IMR-90 (cell line): ENCODE measurements at regions of chr14 and their contacts with region 1.

Region 1: DNA sequence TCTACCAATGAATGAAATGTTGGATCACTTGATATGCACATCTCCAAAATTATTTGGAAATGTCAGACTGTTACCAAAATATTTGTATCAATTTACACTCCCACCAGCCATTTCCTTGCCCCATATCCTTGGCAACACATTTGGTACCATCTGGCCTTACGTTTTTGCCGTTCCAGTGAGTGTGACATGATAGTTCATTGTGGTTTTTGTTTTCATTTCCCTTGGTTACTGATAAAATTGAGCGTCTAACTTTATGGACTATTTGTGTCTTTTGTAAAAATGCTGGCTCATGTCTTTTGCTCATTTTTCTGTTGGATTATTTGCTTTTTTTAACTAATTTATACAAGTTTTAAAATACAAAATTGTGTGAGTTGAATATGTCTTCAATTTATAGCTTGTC is 11.0 kb downstream of the KLHDC1 start:
- DNase-seq: peak; percentile 24
- ATAC-seq: no peak
- H3K4me3 ChIP-seq: no peak overlapping the region
- H3K27ac ChIP-seq: no peak overlapping the region
- H3K4me1 ChIP-seq: no peaks in the 10 kb centered on the region
- H3K27me3 ChIP-seq: no peaks in the 10 kb centered on the region
- CTCF ChIP-seq: no peak
- POLR2A ChIP-seq: no peak
- RAD21 ChIP-seq: no peak

Region 2: GRCh38 chr14:49686425-49686824 is 17.5 kb before region 1 on chr14:
- CTCF ChIA-PET with region 1: no interaction called
- POLR2A ChIA-PET with region 1: interaction called, 14 read pairs
- dilution Hi-C with region 1: no loop called
- in situ Hi-C with region 1: no loop called
- intact Hi-C with region 1: no loop called
- DNase-seq: no peak
- ATAC-seq: no peak
- H3K4me3 ChIP-seq: no peak overlapping the region
- H3K27ac ChIP-seq: no peak overlapping the region
- H3K4me1 ChIP-seq: peaks cover 3% of the 10 kb centered on the region
- H3K27me3 ChIP-seq: no peaks in the 10 kb centered on the region
- CTCF ChIP-seq: no peak
- POLR2A ChIP-seq: no peak
- RAD21 ChIP-seq: no peak

Region 3: DNA sequence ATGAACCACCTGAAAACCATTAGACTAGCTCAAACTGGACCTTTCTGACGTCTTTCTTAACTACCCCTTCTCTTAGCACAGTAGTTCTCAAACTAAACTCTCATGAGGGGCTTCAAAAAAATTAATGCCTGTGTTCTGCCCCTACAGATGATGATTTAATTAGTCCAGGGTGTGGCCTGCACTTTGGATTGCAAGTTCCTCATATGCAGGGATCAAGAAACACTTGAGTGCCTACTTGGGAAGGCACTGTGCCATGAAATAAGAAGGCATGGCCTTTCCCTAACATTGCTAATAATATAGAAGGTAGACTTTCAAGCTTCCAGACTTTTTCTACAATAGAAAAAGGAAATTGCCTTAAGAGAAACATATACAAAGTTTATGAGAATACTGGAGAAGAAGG is 41.2 kb after region 1 on chr14:
- CTCF ChIA-PET with region 1: no interaction called
- POLR2A ChIA-PET with region 1: no interaction called
- dilution Hi-C with region 1: no loop called
- in situ Hi-C with region 1: no loop called
- intact Hi-C with region 1: loop called (anchors 5 kb)
- DNase-seq: no peak
- ATAC-seq: no peak
- H3K4me3 ChIP-seq: no peak overlapping the region
- H3K27ac ChIP-seq: no peak overlapping the region
- H3K4me1 ChIP-seq: peaks cover 2% of the 10 kb centered on the region; the same call in 1 of the 2 replicates
- H3K27me3 ChIP-seq: no peaks in the 10 kb centered on the region
- CTCF ChIP-seq: no peak
- POLR2A ChIP-seq: no peak
- RAD21 ChIP-seq: no peak

Region 4: DNA sequence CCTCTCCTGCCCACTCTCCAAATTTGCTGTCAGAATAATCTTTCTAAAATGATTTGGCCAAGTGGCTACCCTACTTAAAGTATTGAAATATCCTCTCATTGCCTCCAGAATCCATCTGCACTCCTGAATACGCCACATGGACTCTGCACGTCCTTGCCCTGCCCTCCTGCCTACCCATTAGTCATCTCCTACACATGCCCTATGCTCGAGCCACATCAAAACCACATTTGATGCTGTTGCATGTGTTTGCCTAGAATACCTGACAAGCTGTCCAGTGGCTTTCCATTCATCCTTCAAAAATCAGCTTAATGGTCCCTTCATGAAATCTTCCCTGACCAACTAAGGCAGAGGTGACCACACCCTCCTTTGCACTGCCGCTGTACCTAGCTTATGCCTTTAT is 395.4 kb after region 1 on chr14:
- CTCF ChIA-PET with region 1: no interaction called
- POLR2A ChIA-PET with region 1: no interaction called
- dilution Hi-C with region 1: no loop called
- in situ Hi-C with region 1: no loop called
- intact Hi-C with region 1: no loop called
- DNase-seq: no peak
- ATAC-seq: no peak
- H3K4me3 ChIP-seq: no peak overlapping the region
- H3K27ac ChIP-seq: no peak overlapping the region
- H3K4me1 ChIP-seq: 0 out of 2 replicates have a peak, but pooled peaks cover 2% of the 10 kb centered on the region
- H3K27me3 ChIP-seq: no peaks in the 10 kb centered on the region
- CTCF ChIP-seq: no peak
- POLR2A ChIP-seq: no peak
- RAD21 ChIP-seq: no peak